Astrocyte of the cerebellum (primary cell): ENCODE measurements at regions of chr18 and their contacts with region 1.

Region 1: GRCh38 chr18:2547477-2548087 is 23.7 kb downstream of the METTL4 start:
- DNase-seq: peak; percentile 71
- H3K4me3 ChIP-seq: no peak overlapping the region
- CTCF ChIP-seq: no peak

Region 2: GRCh38 chr18:1585879-1586488 is 961.6 kb before region 1 on chr18:
- in situ Hi-C with region 1: loop called (anchors 5 kb)
- DNase-seq: peak; percentile 18
- H3K4me3 ChIP-seq: no peak overlapping the region
- CTCF ChIP-seq: peak; percentile 41

Region 3: DNA sequence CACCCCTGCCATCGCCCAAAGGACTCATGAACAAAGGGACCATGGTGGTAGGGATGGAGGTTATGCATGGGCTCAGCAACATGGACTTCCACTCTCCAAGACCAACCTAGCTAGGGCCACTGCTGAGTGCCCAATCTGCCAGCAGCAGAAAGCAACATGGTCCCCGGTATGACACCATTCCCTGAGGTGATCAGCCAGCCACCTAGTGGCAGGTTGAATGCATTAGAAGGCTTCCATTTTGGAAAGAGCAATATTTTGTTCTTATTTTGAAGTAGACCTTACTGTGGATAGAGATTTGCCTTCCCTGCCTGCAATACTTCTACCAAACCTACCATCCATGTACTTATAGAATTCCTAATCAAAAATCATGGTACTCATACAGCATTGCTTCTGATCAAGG is 76.1 kb before region 1 on chr18:
- in situ Hi-C with region 1: no loop called
- DNase-seq: no peak
- H3K4me3 ChIP-seq: no peak overlapping the region
- CTCF ChIP-seq: no peak

Region 4: GRCh38 chr18:2494921-2495320 is 52.7 kb before region 1 on chr18:
- in situ Hi-C with region 1: no loop called
- DNase-seq: peak; percentile 78
- H3K4me3 ChIP-seq: no peak overlapping the region
- CTCF ChIP-seq: no peak

Region 5: DNA sequence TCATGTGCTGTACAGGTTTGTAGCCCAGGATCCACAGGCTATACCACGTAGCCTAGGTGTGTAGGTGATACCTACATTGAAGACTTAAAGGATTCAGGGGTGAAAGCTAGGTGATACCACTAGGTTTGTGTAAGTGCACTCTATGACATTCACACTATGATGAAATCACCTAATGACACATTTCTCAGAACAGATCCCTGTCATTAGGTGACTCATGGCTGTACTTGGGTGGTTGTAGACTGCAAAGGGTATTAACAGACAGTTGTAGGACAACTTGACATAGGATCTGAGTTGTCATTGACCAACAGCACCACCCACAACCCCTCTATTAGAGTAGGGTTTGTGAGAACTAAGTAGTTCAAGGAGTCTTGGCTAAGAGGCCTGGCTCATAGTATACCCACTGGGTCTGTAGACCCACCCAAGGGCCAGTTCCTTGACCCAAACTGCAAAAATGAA is 80.3 kb after region 1 on chr18:
- in situ Hi-C with region 1: no loop called
- DNase-seq: no peak
- H3K4me3 ChIP-seq: no peak overlapping the region
- CTCF ChIP-seq: no peak